GM12878 (cell line): ENCODE measurements at regions of chr3 and their contacts with region 1.

Region 1: DNA sequence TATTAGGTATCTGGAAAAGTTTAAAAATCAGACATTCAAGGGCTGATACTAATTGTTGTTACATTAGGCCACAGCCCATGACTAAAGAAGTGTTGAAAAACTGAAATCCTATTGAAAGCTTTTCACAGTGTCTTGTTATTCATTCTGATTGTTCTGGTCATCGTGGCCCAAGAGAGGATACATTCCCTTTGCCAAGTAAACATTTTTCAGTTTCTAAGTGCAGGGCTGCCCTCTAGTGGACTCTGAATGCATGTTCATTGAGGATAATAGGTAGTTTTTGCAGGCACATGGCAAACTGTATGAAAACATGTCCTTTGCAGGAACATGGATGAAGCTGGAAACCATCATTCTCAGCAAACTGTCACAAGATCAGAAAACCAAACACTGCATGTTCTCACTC is 181.1 kb downstream of the MYRIP start:
- DNase-seq: peak; percentile 5
- ATAC-seq: peak; percentile 69
- H3K4me3 ChIP-seq: no peak overlapping the region
- H3K27ac ChIP-seq: no peak overlapping the region
- H3K4me1 ChIP-seq: no peaks in the 10 kb centered on the region
- H3K27me3 ChIP-seq: no peaks in the 10 kb centered on the region
- CTCF ChIP-seq: peak; percentile 57 to 59 (median 59)
- EP300 ChIP-seq: no peak
- POLR2A ChIP-seq: no peak
- RAD21 ChIP-seq: peak; percentile 81

Region 2: GRCh38 chr3:39668420-39668819 is 322.1 kb before region 1 on chr3:
- CTCF ChIA-PET with region 1: interaction called, 3 read pairs
- POLR2A ChIA-PET with region 1: no interaction called
- RAD21 ChIA-PET with region 1: no interaction called
- SMC1A ChIA-PET with region 1: no interaction called
- in situ Hi-C with region 1: no loop called
- intact Hi-C with region 1: loop called (anchors 1 kb)
- DNase-seq: no peak
- ATAC-seq: peak; percentile 85
- H3K4me3 ChIP-seq: no peak overlapping the region
- H3K27ac ChIP-seq: no peak overlapping the region
- H3K4me1 ChIP-seq: no peaks in the 10 kb centered on the region
- H3K27me3 ChIP-seq: no peaks in the 10 kb centered on the region; a peak in 2 of 4 replicates
- CTCF ChIP-seq: peak; percentile 53 to 60 (median 58)
- EP300 ChIP-seq: no peak
- POLR2A ChIP-seq: no peak
- RAD21 ChIP-seq: peak; percentile 48

Region 3: GRCh38 chr3:39707314-39707909 is 283.1 kb before region 1 on chr3:
- CTCF ChIA-PET with region 1: interaction called, 3 read pairs
- POLR2A ChIA-PET with region 1: no interaction called
- RAD21 ChIA-PET with region 1: no interaction called
- SMC1A ChIA-PET with region 1: no interaction called
- in situ Hi-C with region 1: loop called (anchors 10 kb)
- intact Hi-C with region 1: loop called (anchors 1 kb)
- DNase-seq: no peak
- ATAC-seq: peak; percentile 73
- H3K4me3 ChIP-seq: no peak overlapping the region
- H3K27ac ChIP-seq: no peak overlapping the region
- H3K4me1 ChIP-seq: no peaks in the 10 kb centered on the region
- H3K27me3 ChIP-seq: no peaks in the 10 kb centered on the region
- CTCF ChIP-seq: peak; percentile 56 to 59 (median 57)
- EP300 ChIP-seq: no peak
- POLR2A ChIP-seq: no peak
- RAD21 ChIP-seq: peak; percentile 53

Region 4: DNA sequence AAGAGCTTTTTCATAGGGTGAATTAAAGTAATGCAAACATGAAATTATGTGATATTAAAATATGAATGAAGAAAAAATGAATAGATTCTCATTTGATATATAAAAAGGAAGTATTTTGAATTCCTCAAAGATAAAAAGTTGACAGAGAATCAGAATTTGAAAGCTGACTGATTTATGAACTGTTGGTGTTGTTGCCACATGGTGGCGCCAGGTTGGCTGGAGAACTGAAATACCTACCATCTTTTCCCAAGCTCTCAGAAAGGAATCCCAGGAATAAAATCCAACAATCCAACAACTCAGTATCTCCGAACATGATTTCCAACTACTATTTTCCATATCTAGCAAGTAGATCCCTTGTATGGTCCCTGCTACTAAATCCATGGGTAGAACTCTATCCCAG is 178.0 kb before region 1 on chr3:
- CTCF ChIA-PET with region 1: interaction called, 7 read pairs
- POLR2A ChIA-PET with region 1: no interaction called
- RAD21 ChIA-PET with region 1: no interaction called
- SMC1A ChIA-PET with region 1: no interaction called
- in situ Hi-C with region 1: no loop called
- intact Hi-C with region 1: loop called (anchors 5 kb)
- DNase-seq: no peak
- ATAC-seq: no peak
- H3K4me3 ChIP-seq: no peak overlapping the region
- H3K27ac ChIP-seq: no peak overlapping the region
- H3K4me1 ChIP-seq: no peaks in the 10 kb centered on the region
- H3K27me3 ChIP-seq: peaks cover 12 to 16% of the 10 kb centered on the region in 2 experiments
- CTCF ChIP-seq: peak; percentile 29 to 33 (median 31); a peak in 4 of 6 replicates
- EP300 ChIP-seq: no peak
- POLR2A ChIP-seq: no peak
- RAD21 ChIP-seq: peak; percentile 9; the same call in 1 of the 2 replicates

Region 5: DNA sequence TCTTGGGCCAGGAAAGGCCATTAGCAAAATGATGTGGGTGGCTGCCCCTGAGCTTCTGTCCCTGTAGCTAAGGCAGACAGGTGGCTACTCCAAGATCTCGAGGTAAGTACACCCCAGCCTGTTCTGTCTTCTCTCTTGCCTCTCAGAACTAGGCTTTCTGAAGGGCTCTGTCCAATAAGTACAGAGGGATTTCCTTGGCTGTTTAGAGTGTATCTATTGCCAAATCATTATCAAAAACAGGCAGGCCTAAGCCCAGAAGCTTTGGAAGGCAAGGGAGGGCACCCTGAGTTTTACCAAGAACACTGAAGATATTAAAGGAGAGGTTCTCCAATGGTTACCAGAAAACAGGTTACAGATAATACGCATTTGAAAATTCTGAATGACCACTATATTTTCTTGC is 24.5 kb before region 1 on chr3:
- CTCF ChIA-PET with region 1: no interaction called
- POLR2A ChIA-PET with region 1: no interaction called
- RAD21 ChIA-PET with region 1: no interaction called
- SMC1A ChIA-PET with region 1: no interaction called
- in situ Hi-C with region 1: no loop called
- intact Hi-C with region 1: no loop called
- DNase-seq: no peak
- ATAC-seq: no peak
- H3K4me3 ChIP-seq: no peak overlapping the region
- H3K27ac ChIP-seq: no peak overlapping the region
- H3K4me1 ChIP-seq: no peaks in the 10 kb centered on the region
- H3K27me3 ChIP-seq: no peaks in the 10 kb centered on the region
- CTCF ChIP-seq: no peak
- EP300 ChIP-seq: no peak
- POLR2A ChIP-seq: no peak
- RAD21 ChIP-seq: no peak